K562 (cell line): ENCODE measurements at regions of chr4 and their contacts with region 1.

Region 1: GRCh38 chr4:84750253-84750959 is 167.5 kb downstream of the CDS1 start:
- DNase-seq: peak; percentile 35 to 47 (median 39)
- ATAC-seq: peak; percentile 83
- H3K4me3 ChIP-seq: no peak overlapping the region
- H3K27ac ChIP-seq: no peak overlapping the region
- H3K4me1 ChIP-seq: no peaks in the 10 kb centered on the region
- H3K27me3 ChIP-seq: no peaks in the 10 kb centered on the region
- CTCF ChIP-seq: peak; percentile 36 to 57 (median 56); a peak in 5 of 6 replicates
- EP300 ChIP-seq: no peak
- POLR2A ChIP-seq: no peak
- RAD21 ChIP-seq: peak; percentile 52 to 60; a peak in 3 of 4 replicates

Region 2: DNA sequence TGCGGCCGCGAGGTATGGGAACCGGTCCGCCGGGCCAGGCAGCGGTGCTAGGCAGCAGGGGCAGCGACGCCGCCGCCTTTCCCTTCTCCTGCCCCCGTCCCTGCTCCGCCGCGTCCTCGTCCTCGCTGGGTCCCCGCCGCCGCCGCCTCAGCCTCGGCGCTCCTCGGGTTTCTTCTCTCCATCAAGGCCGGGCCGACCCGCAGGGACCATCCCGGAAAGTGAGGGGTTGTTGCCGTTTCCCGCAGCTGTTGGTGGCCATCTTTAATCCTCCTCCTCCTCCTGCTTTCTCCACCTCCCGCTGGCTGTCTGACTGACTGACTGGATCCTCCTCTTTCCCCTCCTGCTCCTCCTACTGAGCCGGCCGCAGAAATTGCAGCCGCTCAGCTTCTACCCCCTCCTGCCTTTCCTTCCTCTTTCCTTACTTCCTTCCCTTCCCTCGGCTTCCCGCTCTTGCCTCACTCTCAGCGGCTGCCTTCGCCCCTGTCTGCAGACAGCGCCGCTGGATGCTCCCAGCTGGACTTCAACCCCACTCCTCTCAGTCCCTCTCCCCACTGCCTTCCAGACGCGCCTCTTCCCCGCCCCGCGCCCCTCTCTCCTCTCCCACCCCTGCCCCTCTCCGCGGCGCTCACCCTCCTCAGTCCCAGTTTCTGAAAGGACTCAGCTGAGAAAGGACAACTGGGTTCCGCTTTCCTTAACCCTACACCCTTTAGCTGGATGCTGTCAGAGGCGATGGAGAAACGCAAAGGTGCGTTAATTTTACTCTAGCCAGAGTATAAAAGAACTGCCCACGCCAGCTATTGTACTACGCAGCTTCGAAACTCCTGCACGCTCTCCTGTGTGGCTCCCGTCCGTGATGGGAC is 216.2 kb after region 1 on chr4 and contains the start of gene WDFY3:
- CTCF ChIA-PET with region 1: interaction called, 34 read pairs
- POLR2A ChIA-PET with region 1: interaction called, 4 read pairs
- in situ Hi-C with region 1: loop called (anchors 10 kb)
- intact Hi-C with region 1: loop called (anchors 1 kb)
- DNase-seq: peak; percentile 58 to 83 (median 68)
- ATAC-seq: peak; percentile 92
- H3K4me3 ChIP-seq: peak within 1 kb of the TSS; percentile 63
- H3K27ac ChIP-seq: peak within 1 kb of the TSS; percentile 59
- H3K4me1 ChIP-seq: peaks cover 0 to 15% of the 10 kb centered on the region in 2 experiments; a peak in 3 of 5 replicates
- H3K27me3 ChIP-seq: no peaks in the 10 kb centered on the region
- CTCF ChIP-seq: no peak
- EP300 ChIP-seq: no peak
- POLR2A ChIP-seq: peak; percentile 64
- RAD21 ChIP-seq: no peak
- polyA plus RNA-seq, gene WDFY3: 0.58 to 0.95 TPM